ENCODE measurements at regions of chr7 and their contacts with region 1.

Region 1: GRCh38 chr7:137898839-137899721 is 52.3 kb upstream of the DGKI start:
- DNase-seq: peak; percentile 84
- H3K4me3 Mint-ChIP-seq: no peak overlapping the region
- H3K27ac Mint-ChIP-seq: no peak overlapping the region
- H3K4me1 Mint-ChIP-seq: peaks cover 33% of the 10 kb centered on the region
- H3K27me3 Mint-ChIP-seq: no peaks in the 10 kb centered on the region

Region 2: GRCh38 chr7:137772748-137773147 is 126.3 kb before region 1 on chr7:
- CTCF ChIA-PET with region 1: no interaction called
- POLR2A ChIA-PET with region 1: no interaction called
- intact Hi-C with region 1: loop called (anchors 5 kb)
- DNase-seq: no peak
- H3K4me3 Mint-ChIP-seq: peak overlapping the region; percentile 7
- H3K27ac Mint-ChIP-seq: no peak overlapping the region
- H3K4me1 Mint-ChIP-seq: no peaks in the 10 kb centered on the region
- H3K27me3 Mint-ChIP-seq: peaks cover 2% of the 10 kb centered on the region

Region 3: DNA sequence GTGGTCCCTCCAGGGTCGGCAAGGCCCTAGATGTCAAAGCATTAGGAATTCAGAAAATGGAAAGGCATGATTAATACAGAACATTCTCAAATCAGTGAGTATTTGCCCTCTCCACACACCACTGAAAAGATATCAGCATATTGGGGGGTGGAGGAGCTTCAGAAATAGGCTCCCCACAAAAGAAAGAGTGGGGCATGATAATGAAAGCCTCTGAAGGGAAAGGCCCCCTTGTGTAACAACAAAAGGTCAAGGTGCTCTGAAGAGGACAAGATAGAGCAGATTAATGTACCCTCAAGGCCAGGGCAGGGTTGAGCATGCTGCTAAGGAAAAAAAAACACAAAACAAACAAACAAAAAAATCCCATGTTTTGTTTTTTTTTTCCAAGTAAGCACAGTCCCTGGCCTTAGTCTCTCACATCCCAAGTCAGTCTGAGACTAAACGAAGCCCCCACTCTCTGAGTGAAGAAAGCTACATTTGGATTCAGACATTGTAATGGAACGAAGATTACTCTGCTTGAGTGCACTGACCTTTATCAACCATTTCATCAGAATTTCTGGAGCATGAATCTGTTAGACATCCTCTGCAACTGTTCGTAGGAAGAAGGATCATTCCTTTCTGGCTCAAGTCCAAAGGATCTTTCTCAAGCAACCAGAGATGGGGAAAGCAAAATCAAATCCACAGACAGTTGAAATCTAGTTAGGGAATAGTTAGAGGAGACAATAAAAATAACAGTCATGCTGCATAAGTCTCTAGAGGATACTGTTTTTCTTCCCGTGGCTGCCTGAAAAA is 24.9 kb before region 1 on chr7:
- CTCF ChIA-PET with region 1: interaction called, 4 read pairs
- POLR2A ChIA-PET with region 1: no interaction called
- intact Hi-C with region 1: loop called (anchors 1 kb)
- DNase-seq: no peak
- H3K4me3 Mint-ChIP-seq: no peak overlapping the region
- H3K27ac Mint-ChIP-seq: peak overlapping the region; percentile 57
- H3K4me1 Mint-ChIP-seq: peaks cover 13% of the 10 kb centered on the region
- H3K27me3 Mint-ChIP-seq: no peaks in the 10 kb centered on the region

Region 4: GRCh38 chr7:138002096-138002827 is 103.2 kb after region 1 on chr7:
- CTCF ChIA-PET with region 1: interaction called, 433 read pairs
- POLR2A ChIA-PET with region 1: interaction called, 8 read pairs
- intact Hi-C with region 1: loop called (anchors 1 kb)
- DNase-seq: peak; percentile 98
- H3K4me3 Mint-ChIP-seq: peak overlapping the region; percentile 94
- H3K27ac Mint-ChIP-seq: peak overlapping the region; percentile 87
- H3K4me1 Mint-ChIP-seq: peaks cover 31% of the 10 kb centered on the region
- H3K27me3 Mint-ChIP-seq: no peaks in the 10 kb centered on the region

Region 5: DNA sequence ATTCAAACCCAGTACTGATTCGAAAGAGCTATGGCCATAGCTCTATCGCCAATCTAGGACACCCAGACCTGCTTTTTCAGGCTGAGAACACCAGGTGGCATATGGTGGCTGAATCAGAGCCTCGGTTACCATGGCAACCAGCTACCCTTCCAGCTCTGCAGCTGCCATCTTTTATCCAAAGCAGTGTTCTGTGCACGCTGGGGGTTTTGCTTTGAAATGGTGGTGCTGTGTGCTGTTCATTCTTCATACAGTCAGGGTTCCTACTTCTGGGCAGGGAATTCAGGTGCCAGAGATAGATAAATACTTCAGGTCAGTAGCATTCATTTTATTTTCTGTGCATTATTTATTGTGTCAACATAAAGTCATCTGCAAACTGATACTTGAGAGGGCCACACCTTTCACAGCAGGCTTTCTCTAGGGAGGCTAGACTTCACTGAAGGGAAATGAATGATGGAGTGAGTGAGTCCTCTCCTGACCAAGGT is 262.6 kb after region 1 on chr7:
- CTCF ChIA-PET with region 1: no interaction called
- POLR2A ChIA-PET with region 1: no interaction called
- intact Hi-C with region 1: loop called (anchors 5 kb)
- DNase-seq: peak; percentile 82
- H3K4me3 Mint-ChIP-seq: no peak overlapping the region
- H3K27ac Mint-ChIP-seq: no peak overlapping the region
- H3K4me1 Mint-ChIP-seq: no peaks in the 10 kb centered on the region
- H3K27me3 Mint-ChIP-seq: no peaks in the 10 kb centered on the region

Measured in activated CD4-positive, alpha-beta memory T cell treated with anti-CD3 and anti-CD28 coated beads for 36 hours (primary cell).